ENCODE measurements at regions of chr16 and their contacts with region 1.

Region 1: GRCh38 chr16:75622761-75623605 is at the start of gene ADAT1:
- DNase-seq: peak; percentile 94 to 100 (median 97)
- ATAC-seq: peak; percentile 92
- H3K4me3 ChIP-seq: peak within 1 kb of the TSS; percentile 94
- H3K4me3 Mint-ChIP-seq: peak within 1 kb of the TSS; percentile 99
- H3K27ac ChIP-seq: peak within 1 kb of the TSS; percentile 87 to 98
- H3K27ac Mint-ChIP-seq: peak within 1 kb of the TSS; percentile 99
- H3K4me1 ChIP-seq: peaks cover 61% of the 10 kb centered on the region
- H3K4me1 Mint-ChIP-seq: peaks cover 77% of the 10 kb centered on the region
- H3K27me3 ChIP-seq: no peaks in the 10 kb centered on the region
- H3K27me3 Mint-ChIP-seq: no peaks in the 10 kb centered on the region
- CTCF ChIP-seq: no peak
- total RNA-seq, gene ADAT1: 46.7 to 47.6 TPM

Region 2: DNA sequence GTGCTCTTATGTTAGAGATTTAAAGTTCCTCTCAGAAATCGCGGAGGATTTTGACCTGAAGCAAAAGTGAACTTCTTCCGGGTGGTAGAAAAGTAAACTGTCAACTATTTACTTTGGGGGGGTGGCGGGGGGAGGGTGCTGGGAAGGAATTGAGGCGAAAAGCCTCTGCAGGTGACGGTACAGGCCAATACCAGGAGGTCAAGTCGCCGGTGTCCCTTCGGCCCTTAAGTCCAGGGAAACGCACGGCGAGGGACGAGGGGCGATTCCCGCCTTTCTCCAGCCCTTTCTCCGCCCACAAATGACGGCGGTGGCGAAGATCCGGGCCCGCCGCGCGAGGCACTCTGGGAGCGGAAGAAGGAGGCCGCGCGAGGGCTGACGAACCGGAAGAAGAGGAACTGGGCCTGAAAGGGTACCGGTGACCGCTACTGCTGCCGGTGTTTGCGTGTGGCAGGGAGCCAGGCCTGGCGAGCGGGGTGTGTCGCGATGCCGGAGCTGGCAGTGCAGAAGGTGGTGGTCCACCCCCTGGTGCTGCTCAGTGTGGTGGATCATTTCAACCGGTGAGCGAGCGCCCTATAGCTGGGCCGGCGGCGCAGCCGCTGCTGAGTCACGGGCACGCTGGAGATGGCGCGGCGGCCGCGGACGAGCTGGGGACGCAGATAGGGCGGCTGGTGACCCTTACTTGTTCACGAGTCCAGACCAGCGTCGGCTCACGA is 1326.4 kb before region 1 on chr16 and contains the start of gene PSMD7:
- CTCF ChIA-PET with region 1: no interaction called
- POLR2A ChIA-PET with region 1: interaction called, 4 read pairs
- intact Hi-C with region 1: loop called in 1 of 2 experiments (anchors 10 kb)
- DNase-seq: peak; percentile 77 to 94 (median 84)
- ATAC-seq: peak; percentile 90
- H3K4me3 ChIP-seq: peak within 1 kb of the TSS; percentile 86
- H3K4me3 Mint-ChIP-seq: peak within 1 kb of the TSS; percentile 98
- H3K27ac ChIP-seq: peak within 1 kb of the TSS; percentile 96 to 98
- H3K27ac Mint-ChIP-seq: peak within 1 kb of the TSS; percentile 96
- H3K4me1 ChIP-seq: peaks cover 21% of the 10 kb centered on the region
- H3K4me1 Mint-ChIP-seq: peaks cover 42% of the 10 kb centered on the region
- H3K27me3 ChIP-seq: no peaks in the 10 kb centered on the region
- H3K27me3 Mint-ChIP-seq: no peaks in the 10 kb centered on the region
- CTCF ChIP-seq: no peak
- total RNA-seq, gene PSMD7: 123 to 127 TPM

Region 3: DNA sequence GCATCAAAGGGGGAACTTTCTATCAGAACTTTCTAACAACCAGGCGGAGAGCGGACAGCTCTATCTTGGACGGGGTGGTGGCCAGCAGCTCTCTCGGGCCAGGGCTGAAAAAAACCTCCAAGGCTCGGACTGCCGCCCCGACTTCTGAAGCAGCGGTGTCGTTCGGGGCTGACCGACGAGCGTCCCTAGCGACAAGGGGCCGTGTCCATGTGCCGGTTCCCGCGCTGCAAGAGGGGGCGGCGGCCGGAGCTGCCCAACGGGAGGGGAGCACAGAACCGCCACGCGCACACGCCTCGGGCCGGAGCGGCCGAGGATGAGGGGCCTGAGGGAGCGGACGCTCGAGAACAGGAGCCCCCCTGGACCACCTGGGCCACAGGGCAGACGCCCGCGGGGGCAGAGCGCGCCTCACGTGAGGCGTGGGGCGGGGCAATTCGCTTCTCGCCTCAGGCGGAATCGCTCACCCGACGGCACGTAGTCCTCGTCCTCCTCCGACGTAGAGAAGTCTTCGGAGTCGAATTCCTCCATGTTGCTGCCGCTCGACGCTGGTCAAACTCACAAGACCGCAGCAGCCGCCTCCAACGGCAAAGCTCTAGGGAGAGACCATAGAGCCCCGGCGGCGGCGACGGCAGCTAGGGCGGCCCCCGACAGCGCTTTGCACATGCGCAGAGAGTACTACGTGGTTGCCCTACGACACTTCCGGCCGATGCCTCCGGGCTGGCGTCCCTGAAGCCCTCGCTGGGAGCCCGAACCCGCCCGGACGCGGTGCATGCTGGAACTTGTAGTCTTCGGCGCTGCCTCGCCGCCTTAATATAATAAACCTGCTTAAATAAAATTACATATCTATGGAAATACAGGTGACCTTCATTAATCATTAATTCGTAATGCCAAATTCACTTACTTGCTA is 189.9 kb before region 1 on chr16 and contains the start of gene CFDP1:
- CTCF ChIA-PET with region 1: no interaction called
- POLR2A ChIA-PET with region 1: interaction called, 16 read pairs
- intact Hi-C with region 1: loop called (anchors 1 to 5 kb)
- DNase-seq: peak; percentile 92 to 98 (median 94)
- ATAC-seq: peak; percentile 79
- H3K4me3 ChIP-seq: peak within 1 kb of the TSS; percentile 83
- H3K4me3 Mint-ChIP-seq: peak within 1 kb of the TSS; percentile 94
- H3K27ac ChIP-seq: peak within 1 kb of the TSS; percentile 96 to 97
- H3K27ac Mint-ChIP-seq: peak within 1 kb of the TSS; percentile 96
- H3K4me1 ChIP-seq: peaks cover 33% of the 10 kb centered on the region
- H3K4me1 Mint-ChIP-seq: peaks cover 28% of the 10 kb centered on the region
- H3K27me3 ChIP-seq: no peaks in the 10 kb centered on the region
- H3K27me3 Mint-ChIP-seq: no peaks in the 10 kb centered on the region
- CTCF ChIP-seq: no peak
- total RNA-seq, gene CFDP1: 23.0 to 25.5 TPM

Region 4: DNA sequence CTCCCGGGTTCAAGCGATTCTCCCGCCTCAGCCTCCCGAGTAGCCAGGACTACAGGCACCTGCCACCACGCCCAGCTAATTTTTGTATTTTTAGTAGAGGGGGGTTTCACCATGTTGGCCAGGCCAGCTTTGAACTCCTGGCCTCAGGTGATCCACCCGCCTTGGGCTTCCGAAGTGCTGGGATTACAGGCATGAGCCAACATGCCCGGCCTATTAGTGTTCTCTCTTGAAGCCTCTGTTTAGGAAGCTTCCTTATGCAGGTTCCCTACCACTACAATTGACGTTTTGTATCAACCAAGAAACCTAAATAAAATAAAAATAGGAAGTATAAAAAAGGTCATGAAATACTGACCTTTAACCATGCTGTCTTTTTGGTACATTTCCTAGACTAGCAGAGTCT is 103.1 kb before region 1 on chr16:
- CTCF ChIA-PET with region 1: interaction called, 8 read pairs
- POLR2A ChIA-PET with region 1: interaction called, 23 read pairs
- intact Hi-C with region 1: loop called (anchors 2 kb)
- DNase-seq: no peak
- ATAC-seq: no peak
- H3K4me3 ChIP-seq: no peak overlapping the region
- H3K4me3 Mint-ChIP-seq: no peak overlapping the region
- H3K27ac ChIP-seq: no peak overlapping the region
- H3K27ac Mint-ChIP-seq: no peak overlapping the region
- H3K4me1 ChIP-seq: peaks cover 12% of the 10 kb centered on the region
- H3K4me1 Mint-ChIP-seq: peaks cover 14% of the 10 kb centered on the region
- H3K27me3 ChIP-seq: no peaks in the 10 kb centered on the region
- H3K27me3 Mint-ChIP-seq: no peaks in the 10 kb centered on the region
- CTCF ChIP-seq: no peak

Region 5: GRCh38 chr16:75566040-75566810 is 56.8 kb before region 1 on chr16 and contains the start of gene GABARAPL2:
- CTCF ChIA-PET with region 1: interaction called, 10 read pairs
- POLR2A ChIA-PET with region 1: interaction called, 59 read pairs
- intact Hi-C with region 1: loop called (anchors 1 to 2 kb)
- DNase-seq: peak; percentile 83 to 95 (median 88)
- ATAC-seq: peak; percentile 75
- H3K4me3 ChIP-seq: peak within 1 kb of the TSS; percentile 90
- H3K4me3 Mint-ChIP-seq: peak within 1 kb of the TSS; percentile 94
- H3K27ac ChIP-seq: peak within 1 kb of the TSS; percentile 69 to 76
- H3K27ac Mint-ChIP-seq: peak within 1 kb of the TSS; percentile 89
- H3K4me1 ChIP-seq: peaks cover 41% of the 10 kb centered on the region
- H3K4me1 Mint-ChIP-seq: peaks cover 39% of the 10 kb centered on the region
- H3K27me3 ChIP-seq: no peaks in the 10 kb centered on the region
- H3K27me3 Mint-ChIP-seq: peaks cover 14% of the 10 kb centered on the region
- CTCF ChIP-seq: no peak
- total RNA-seq, gene GABARAPL2: 44.6 to 48.3 TPM

Region 6: GRCh38 chr16:75764154-75764768 is 141.3 kb after region 1 on chr16:
- CTCF ChIA-PET with region 1: no interaction called
- POLR2A ChIA-PET with region 1: interaction called, 3 read pairs
- intact Hi-C with region 1: loop called in 1 of 2 experiments (anchors 5 kb)
- DNase-seq: peak; percentile 31 to 84 (median 44)
- ATAC-seq: peak; percentile 97
- H3K4me3 ChIP-seq: no peak overlapping the region
- H3K4me3 Mint-ChIP-seq: no peak overlapping the region
- H3K27ac ChIP-seq: no peak overlapping the region
- H3K27ac Mint-ChIP-seq: no peak overlapping the region
- H3K4me1 ChIP-seq: peaks cover 6% of the 10 kb centered on the region
- H3K4me1 Mint-ChIP-seq: no peaks in the 10 kb centered on the region
- H3K27me3 ChIP-seq: peaks cover 0 to 3% of the 10 kb centered on the region in 2 experiments
- H3K27me3 Mint-ChIP-seq: no peaks in the 10 kb centered on the region
- CTCF ChIP-seq: peak; percentile 82